MCF 10A (cell line): ENCODE measurements at regions of chr6 and their contacts with region 1.

Region 1: DNA sequence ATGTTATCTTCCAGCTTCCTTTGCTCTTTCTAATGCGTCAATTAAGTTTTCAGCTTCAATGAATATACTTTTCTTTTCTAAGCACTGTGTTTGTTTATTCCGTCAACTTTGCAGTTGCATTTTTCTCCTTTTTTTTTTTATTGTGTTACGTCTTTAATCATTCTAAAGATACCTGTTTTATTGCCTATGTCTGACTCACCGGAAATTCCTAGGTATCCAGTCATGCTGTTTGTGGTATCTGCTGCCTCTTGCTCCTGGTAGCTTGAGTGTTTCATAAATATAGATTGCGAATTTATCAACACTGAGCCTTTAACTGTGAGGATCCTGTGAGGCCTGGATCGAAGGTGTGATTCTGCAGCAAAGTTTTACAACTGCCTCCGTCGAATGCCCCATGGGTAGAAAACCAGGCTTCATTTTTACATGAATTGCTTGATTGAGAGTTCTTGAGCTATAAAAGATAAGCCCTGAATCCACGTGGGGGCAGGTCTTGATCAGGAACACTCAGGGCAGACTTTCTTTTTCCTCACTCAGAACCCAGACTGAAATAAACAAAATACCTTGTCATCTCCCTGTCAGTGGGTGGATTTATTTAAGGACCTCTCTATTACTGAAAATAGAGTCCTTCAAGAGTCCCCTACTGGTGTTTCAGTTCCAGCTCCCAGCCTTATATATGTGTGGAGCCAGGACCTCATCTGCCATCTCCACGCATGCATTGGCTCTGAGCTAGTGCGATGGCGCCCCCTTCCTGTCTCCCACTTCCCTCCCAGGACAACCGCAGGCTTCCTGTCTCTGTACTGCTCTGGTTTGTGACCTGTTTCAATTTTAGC is 60.1 kb upstream of the LRRC1 start:
- DNase-seq: peak; percentile 92
- H3K4me3 Mint-ChIP-seq: peak overlapping the region; percentile 44
- H3K27ac Mint-ChIP-seq: peak overlapping the region; percentile 83
- H3K4me1 Mint-ChIP-seq: peaks cover 36% of the 10 kb centered on the region
- H3K27me3 Mint-ChIP-seq: no peaks in the 10 kb centered on the region
- CTCF ChIP-seq: peak; percentile 35

Region 2: GRCh38 chr6:53673162-53673683 is 61.5 kb before region 1 on chr6:
- CTCF ChIA-PET with region 1: no interaction called
- POLR2A ChIA-PET with region 1: no interaction called
- intact Hi-C with region 1: no loop called
- DNase-seq: peak; percentile 86
- H3K4me3 Mint-ChIP-seq: peak overlapping the region; percentile 2
- H3K27ac Mint-ChIP-seq: peak overlapping the region; percentile 80
- H3K4me1 Mint-ChIP-seq: peaks cover 14% of the 10 kb centered on the region
- H3K27me3 Mint-ChIP-seq: no peaks in the 10 kb centered on the region
- CTCF ChIP-seq: no peak

Region 3: GRCh38 chr6:53746442-53747103 is 11.9 kb after region 1 on chr6:
- CTCF ChIA-PET with region 1: interaction called, 18 read pairs
- POLR2A ChIA-PET with region 1: interaction called, 52 read pairs
- intact Hi-C with region 1: no loop called
- DNase-seq: peak; percentile 58
- H3K4me3 Mint-ChIP-seq: no peak overlapping the region
- H3K27ac Mint-ChIP-seq: peak overlapping the region; percentile 9
- H3K4me1 Mint-ChIP-seq: peaks cover 7% of the 10 kb centered on the region
- H3K27me3 Mint-ChIP-seq: no peaks in the 10 kb centered on the region
- CTCF ChIP-seq: no peak

Region 4: GRCh38 chr6:53752856-53753255 is 18.2 kb after region 1 on chr6:
- CTCF ChIA-PET with region 1: interaction called, 18 read pairs
- POLR2A ChIA-PET with region 1: interaction called, 52 read pairs
- intact Hi-C with region 1: no loop called
- DNase-seq: peak; percentile 61
- H3K4me3 Mint-ChIP-seq: peak overlapping the region; percentile 16
- H3K27ac Mint-ChIP-seq: peak overlapping the region; percentile 98
- H3K4me1 Mint-ChIP-seq: peaks cover 21% of the 10 kb centered on the region
- H3K27me3 Mint-ChIP-seq: no peaks in the 10 kb centered on the region
- CTCF ChIP-seq: no peak

Region 5: DNA sequence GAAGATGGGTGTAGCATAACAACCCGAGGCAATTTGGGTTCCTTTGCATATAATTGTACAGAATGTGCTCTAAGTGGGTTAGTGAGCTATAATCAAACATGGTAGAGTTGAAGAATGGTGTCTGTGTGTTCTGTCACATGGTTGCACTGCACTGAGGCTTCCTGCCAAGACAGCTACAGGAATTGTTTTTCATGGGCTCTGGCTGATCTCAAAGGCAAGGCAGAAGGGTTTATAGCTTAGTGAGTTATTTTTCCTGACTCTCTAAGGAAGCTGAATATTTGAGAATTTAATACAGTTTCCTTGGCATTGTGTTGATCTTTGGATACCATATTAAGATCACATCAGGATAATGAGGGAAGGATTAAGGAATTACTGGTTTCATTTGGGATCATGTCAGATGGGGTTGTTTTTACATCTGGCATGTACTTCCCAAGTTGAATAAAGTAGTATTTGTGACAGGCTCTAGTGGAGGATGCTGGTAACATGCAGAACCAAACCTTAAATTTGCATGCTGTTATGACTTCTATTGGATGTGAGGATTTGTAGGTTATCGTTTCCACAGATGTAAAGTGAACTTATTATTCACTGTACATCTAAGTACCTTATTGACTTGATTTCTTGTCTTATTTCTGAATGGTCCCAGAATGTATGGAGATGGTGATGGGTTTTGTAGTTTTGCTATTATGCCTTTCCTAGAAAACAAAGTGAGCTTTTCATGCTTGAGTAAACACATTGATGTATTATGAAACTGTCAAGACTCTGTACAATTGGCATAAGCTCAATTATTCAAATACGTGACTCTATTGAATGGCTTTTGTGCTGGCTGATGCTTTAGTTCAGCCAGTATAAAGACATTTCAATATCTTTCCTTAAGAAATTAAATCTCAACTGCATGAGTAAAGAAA is 103.4 kb after region 1 on chr6:
- CTCF ChIA-PET with region 1: no interaction called
- POLR2A ChIA-PET with region 1: no interaction called
- intact Hi-C with region 1: no loop called
- DNase-seq: no peak
- H3K4me3 Mint-ChIP-seq: no peak overlapping the region
- H3K27ac Mint-ChIP-seq: peak overlapping the region; percentile 20
- H3K4me1 Mint-ChIP-seq: peaks cover 22% of the 10 kb centered on the region
- H3K27me3 Mint-ChIP-seq: no peaks in the 10 kb centered on the region
- CTCF ChIP-seq: no peak